Activated CD4-positive, alpha-beta memory T cell treated with anti-CD3 and anti-CD28 coated beads for 36 hours (primary cell): ENCODE measurements at regions of chr3 and their contacts with region 1.

Region 1: DNA sequence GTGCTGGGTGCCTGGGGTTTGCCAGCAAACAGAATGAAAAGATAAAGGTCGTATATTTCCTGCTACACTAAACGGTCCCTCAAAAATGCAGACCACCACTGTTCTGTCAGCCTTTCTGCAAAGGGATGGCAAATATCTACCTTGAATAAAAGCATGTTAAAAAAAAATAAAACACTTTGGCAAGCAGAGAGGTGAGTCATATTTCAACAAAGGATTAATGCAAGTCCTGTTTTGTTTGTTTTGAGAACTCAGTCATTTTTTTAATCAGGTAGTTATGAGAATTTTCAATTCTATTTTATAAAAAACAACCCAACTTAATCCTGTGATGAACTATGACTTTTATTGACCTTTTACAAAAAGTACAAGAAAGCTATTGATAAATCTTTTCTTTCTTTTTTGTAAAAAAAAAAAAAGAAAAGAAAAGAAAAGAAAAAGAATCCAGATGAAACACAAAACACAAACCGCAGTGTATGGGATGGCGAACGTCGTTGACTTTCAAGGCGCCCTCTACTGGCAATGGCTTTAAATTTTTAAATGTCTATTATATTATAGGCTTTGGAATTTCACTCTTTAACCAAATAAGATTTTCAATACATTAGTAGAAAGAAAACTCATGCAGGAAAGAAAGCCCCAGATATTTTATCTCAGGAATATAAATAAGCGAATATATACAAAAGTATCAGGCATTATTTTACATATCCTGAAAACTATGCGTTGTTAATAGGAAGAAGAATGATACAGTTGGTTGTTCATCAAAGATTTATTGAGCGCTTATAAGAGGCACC is 87.8 kb downstream of the NCEH1 start:
- DNase-seq: peak; percentile 44
- H3K4me3 Mint-ChIP-seq: no peak overlapping the region
- H3K27ac Mint-ChIP-seq: no peak overlapping the region
- H3K4me1 Mint-ChIP-seq: peaks cover 9% of the 10 kb centered on the region
- H3K27me3 Mint-ChIP-seq: no peaks in the 10 kb centered on the region

Region 2: GRCh38 chr3:171916888-171917287 is 706.2 kb before region 1 on chr3:
- CTCF ChIA-PET with region 1: no interaction called
- POLR2A ChIA-PET with region 1: no interaction called
- intact Hi-C with region 1: no loop called
- DNase-seq: no peak
- H3K4me3 Mint-ChIP-seq: no peak overlapping the region
- H3K27ac Mint-ChIP-seq: no peak overlapping the region
- H3K4me1 Mint-ChIP-seq: no peaks in the 10 kb centered on the region
- H3K27me3 Mint-ChIP-seq: peaks cover 20% of the 10 kb centered on the region

Region 3: GRCh38 chr3:172666873-172667694 is 44.0 kb after region 1 on chr3:
- CTCF ChIA-PET with region 1: interaction called, 8 read pairs
- POLR2A ChIA-PET with region 1: no interaction called
- intact Hi-C with region 1: loop called (anchors 2 kb)
- DNase-seq: peak; percentile 82
- H3K4me3 Mint-ChIP-seq: no peak overlapping the region
- H3K27ac Mint-ChIP-seq: no peak overlapping the region
- H3K4me1 Mint-ChIP-seq: peaks cover 14% of the 10 kb centered on the region
- H3K27me3 Mint-ChIP-seq: no peaks in the 10 kb centered on the region